ENCODE measurements at regions of chr17 and their contacts with region 1.

Region 1: GRCh38 chr17:14926526-14927122 is 338.5 kb downstream of the PMP22 start:
- DNase-seq: no peak
- ATAC-seq: no peak
- H3K4me3 ChIP-seq: no peak overlapping the region
- H3K27ac ChIP-seq: no peak overlapping the region
- H3K4me1 ChIP-seq: peaks cover 0 to 2% of the 10 kb centered on the region in 2 donors
- H3K27me3 ChIP-seq: no peaks in the 10 kb centered on the region

Region 2: DNA sequence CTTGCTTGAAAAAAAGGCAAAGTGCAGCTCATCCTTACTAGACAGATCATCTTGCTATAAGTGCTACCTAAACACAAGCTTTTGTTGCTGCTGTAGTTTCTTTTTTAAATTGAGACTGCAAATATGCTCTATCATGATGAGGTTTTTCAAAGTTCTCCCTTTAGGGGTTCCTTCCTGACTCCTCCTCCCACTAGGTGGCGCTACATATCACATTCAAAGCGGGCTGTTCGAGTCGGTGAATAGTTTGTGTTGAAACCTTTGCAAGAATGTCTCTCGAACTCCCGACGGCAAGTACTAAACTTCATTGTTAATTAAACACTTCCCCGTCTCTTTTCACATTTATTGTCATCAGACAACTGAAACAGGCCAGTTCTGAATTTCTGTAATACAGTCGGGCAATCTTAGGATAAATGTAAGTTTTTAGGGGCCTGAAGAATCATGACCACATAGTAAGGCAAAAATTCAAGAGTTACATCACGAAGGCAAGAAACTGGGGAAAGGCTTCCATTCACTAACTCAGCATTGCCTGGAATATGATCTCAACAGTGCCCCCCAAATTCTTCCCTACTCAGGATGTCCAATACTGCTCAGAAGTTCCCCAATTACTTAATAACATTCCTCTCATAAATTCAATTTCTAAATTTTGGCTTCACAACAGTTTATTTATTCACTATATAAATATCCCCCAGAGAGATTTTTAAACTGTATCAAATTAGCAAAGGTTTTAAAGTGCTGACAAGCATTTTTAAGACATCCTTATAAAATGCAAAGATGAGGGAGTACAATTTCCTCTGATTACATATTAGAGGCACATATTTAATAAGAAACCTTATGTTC is 1331.6 kb before region 1 on chr17:
- intact Hi-C with region 1: loop called (anchors 10 kb)
- DNase-seq: peak in 1 of 2 donors; percentile 70
- ATAC-seq: peak; percentile 80
- H3K4me3 ChIP-seq: no peak overlapping the region
- H3K27ac ChIP-seq: no peak overlapping the region
- H3K4me1 ChIP-seq: no peaks in the 10 kb centered on the region
- H3K27me3 ChIP-seq: peaks cover 0 to 3% of the 10 kb centered on the region in 2 donors

Region 3: GRCh38 chr17:13601776-13602551 is 1324.7 kb before region 1 on chr17 and contains the start of gene HS3ST3A1:
- intact Hi-C with region 1: loop called (anchors 10 kb)
- DNase-seq: peak; percentile 61 to 79
- ATAC-seq: peak; percentile 55
- H3K4me3 ChIP-seq: no peak within 1 kb of the TSS
- H3K27ac ChIP-seq: no peak within 1 kb of the TSS
- H3K4me1 ChIP-seq: no peaks in the 10 kb centered on the region
- H3K27me3 ChIP-seq: no peaks in the 10 kb centered on the region
- total RNA-seq, gene HS3ST3A1: 0.33 to 0.36 TPM

Region 4: DNA sequence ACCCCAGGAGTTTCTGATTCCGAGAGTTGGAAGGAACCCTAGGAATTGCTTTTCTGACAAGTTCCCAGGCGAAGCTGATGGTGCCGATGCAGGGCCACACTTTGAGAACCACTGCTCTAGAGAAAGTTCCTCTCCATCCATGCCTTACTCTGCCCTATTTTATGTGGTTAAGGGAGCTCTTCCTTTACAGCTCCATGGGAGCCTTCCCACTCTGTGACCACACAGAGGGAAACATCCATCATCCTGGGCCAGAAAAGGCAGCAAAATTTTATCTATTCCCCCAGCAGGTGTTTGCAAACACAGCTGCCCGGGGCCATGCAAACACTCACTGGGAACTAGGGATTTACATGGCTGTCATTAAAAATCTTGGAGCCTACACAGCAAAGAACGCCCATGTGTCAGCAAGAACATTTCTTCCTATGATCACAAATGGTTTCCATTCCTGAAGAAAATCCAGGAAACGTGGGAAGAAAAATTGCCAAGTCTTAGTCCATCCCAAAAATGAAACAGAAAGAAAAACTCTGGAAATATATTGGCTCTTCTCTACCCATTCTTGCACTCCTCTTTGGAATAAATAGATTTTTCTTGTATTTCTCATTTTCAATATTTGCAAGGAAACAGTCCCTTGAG is 85.8 kb after region 1 on chr17:
- intact Hi-C with region 1: no loop called
- DNase-seq: no peak
- ATAC-seq: no peak
- H3K4me3 ChIP-seq: no peak overlapping the region
- H3K27ac ChIP-seq: no peak overlapping the region
- H3K4me1 ChIP-seq: no peaks in the 10 kb centered on the region
- H3K27me3 ChIP-seq: no peaks in the 10 kb centered on the region

Measured in aorta (tissue), 5 donors.